ENCODE measurements at regions of chr1 and their contacts with region 1.

Region 1: DNA sequence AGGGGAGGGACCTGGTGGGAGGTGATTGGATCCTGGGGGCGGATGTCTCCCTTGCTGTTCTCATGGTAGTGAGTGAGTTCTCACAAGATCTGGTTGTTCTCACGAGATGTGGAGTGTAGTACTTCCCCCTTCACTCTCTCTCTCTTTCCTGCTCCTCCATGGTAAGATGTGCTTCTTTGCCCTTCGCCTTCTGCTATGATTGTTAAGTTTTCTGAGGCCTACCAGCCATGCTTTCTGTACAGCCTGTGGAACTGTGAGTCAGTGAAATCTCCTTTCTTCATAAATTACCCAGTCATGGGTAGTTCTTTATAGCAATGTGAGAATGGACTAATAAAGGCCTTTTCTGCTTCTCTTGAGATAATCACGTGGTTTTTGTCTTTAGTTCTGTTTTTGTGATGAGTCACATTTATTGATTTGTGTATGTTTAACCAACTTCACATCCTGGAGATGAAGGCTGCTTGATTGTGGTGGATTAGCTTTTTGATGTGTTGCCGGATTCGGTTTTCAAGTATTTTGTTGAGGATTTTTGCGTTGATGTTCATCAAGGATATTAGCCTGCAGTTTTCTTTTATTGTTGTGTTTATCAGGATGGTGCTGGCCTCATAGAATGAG is 45.5 kb downstream of the RABGAP1L start:
- DNase-seq: no peak
- ATAC-seq: peak; percentile 46
- H3K4me3 ChIP-seq: no peak overlapping the region
- H3K4me3 Mint-ChIP-seq: peak overlapping the region in 3 of 10 donors; percentile 2 to 13 (median 3)
- H3K27ac ChIP-seq: no peak overlapping the region
- H3K27ac Mint-ChIP-seq: peak overlapping the region in 3 of 9 donors; percentile 4 to 51 (median 12)
- H3K4me1 ChIP-seq: peaks cover 16 to 21% of the 10 kb centered on the region in 2 donors
- H3K4me1 Mint-ChIP-seq: peaks cover 32 to 65% (median 42%) of the 10 kb centered on the region in 7 donors
- H3K27me3 ChIP-seq: no peaks in the 10 kb centered on the region
- H3K27me3 Mint-ChIP-seq: no peaks in the 10 kb centered on the region

Region 2: GRCh38 chr1:173853074-173853473 is 351.7 kb before region 1 on chr1:
- CTCF ChIA-PET with region 1: no interaction called
- POLR2A ChIA-PET with region 1: no interaction called
- intact Hi-C with region 1: loop called in 1 of 2 experiments (anchors 5 kb)
- DNase-seq: no peak
- ATAC-seq: no peak
- H3K4me3 ChIP-seq: no peak overlapping the region
- H3K4me3 Mint-ChIP-seq: no peak overlapping the region
- H3K27ac ChIP-seq: no peak overlapping the region
- H3K27ac Mint-ChIP-seq: no peak overlapping the region
- H3K4me1 ChIP-seq: no peaks in the 10 kb centered on the region
- H3K4me1 Mint-ChIP-seq: peaks cover 0 to 5% (median 0%) of the 10 kb centered on the region in 7 donors
- H3K27me3 ChIP-seq: no peaks in the 10 kb centered on the region
- H3K27me3 Mint-ChIP-seq: no peaks in the 10 kb centered on the region

Region 3: GRCh38 chr1:174775614-174776013 is 570.8 kb after region 1 on chr1:
- CTCF ChIA-PET with region 1: no interaction called
- POLR2A ChIA-PET with region 1: no interaction called
- intact Hi-C with region 1: no loop called
- DNase-seq: no peak
- ATAC-seq: no peak
- H3K4me3 ChIP-seq: no peak overlapping the region
- H3K4me3 Mint-ChIP-seq: no peak overlapping the region
- H3K27ac ChIP-seq: no peak overlapping the region
- H3K27ac Mint-ChIP-seq: no peak overlapping the region
- H3K4me1 ChIP-seq: no peaks in the 10 kb centered on the region
- H3K4me1 Mint-ChIP-seq: peaks cover 2 to 17% (median 12%) of the 10 kb centered on the region in 7 donors
- H3K27me3 ChIP-seq: no peaks in the 10 kb centered on the region
- H3K27me3 Mint-ChIP-seq: no peaks in the 10 kb centered on the region

Measured in naive thymus-derived CD4-positive, alpha-beta T cell (primary cell).